Heart left ventricle (tissue), 16 donors: ENCODE measurements at regions of chr2 and their contacts with region 1.

Region 1: DNA sequence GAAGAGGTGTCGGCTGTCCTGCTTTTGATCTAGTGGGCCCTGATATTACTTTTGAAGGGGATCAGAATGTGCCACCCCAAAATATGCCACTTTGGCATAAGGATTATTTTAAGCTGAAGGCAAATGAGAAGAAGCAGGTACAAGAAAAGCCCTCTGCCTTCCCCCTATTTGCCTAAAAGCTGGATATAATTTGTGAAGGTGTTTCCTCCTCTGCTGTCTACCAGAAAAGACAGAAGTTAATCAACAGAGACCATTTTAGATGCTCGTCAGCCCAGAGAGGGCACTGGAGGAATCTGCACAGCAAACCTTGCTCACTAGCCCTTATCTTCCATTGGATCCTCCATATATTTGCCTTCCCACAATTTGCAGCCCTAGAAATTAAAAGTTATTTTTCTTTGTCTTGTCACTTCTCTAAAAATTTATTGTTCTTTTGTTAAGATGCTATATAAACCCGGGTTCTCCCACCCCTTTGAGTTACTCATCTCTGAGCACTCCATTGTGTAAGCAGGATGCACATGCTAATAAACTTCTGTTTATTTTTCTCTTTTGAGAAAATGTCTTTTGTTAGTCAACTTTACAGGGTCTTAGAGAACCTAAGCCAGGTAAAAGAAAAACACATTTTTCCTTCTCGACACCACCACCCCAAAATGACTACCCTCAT is 163.2 kb upstream of the SLC1A4 start:
- DNase-seq: no peak
- ATAC-seq: no peak
- H3K4me3 ChIP-seq: no peak overlapping the region
- H3K27ac ChIP-seq: no peak overlapping the region
- H3K4me1 ChIP-seq: peaks cover 0 to 2% (median under 1%) of the 10 kb centered on the region in 12 donors
- H3K27me3 ChIP-seq: no peaks in the 10 kb centered on the region
- CTCF ChIP-seq: no peak
- POLR2A ChIP-seq: no peak

Region 2: GRCh38 chr2:64782051-64782390 is 43.9 kb before region 1 on chr2:
- intact Hi-C with region 1: loop called in 1 of 10 experiments (anchors 5 kb)
- DNase-seq: no peak
- ATAC-seq: no peak
- H3K4me3 ChIP-seq: no peak overlapping the region
- H3K27ac ChIP-seq: no peak overlapping the region
- H3K4me1 ChIP-seq: peaks cover 0 to 18% (median 10%) of the 10 kb centered on the region in 12 donors
- H3K27me3 ChIP-seq: no peaks in the 10 kb centered on the region
- CTCF ChIP-seq: no peak
- POLR2A ChIP-seq: no peak